Thyroid gland (tissue), 4 donors: ENCODE measurements at regions of chr3 and their contacts with region 1.

Region 1: DNA sequence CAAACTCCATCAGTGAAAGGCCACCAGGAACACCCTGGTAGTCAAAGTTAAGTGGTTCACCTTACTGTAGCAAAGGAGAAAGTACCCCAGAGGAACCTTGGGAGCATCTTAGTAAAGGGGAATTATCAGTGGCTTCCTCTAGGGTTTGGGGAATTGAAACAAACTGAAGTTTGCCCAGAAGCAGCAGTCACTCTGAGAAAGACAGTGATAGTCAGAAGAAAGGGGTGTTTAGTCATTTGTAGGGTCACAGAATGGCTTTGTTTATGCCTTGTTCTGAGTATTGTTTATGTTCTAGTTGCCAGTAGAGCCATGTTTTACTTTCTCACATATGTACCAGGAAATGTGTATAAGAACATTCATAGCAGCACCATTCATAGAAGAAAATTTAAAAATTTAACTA is 93.8 kb downstream of the FHIT start:
- DNase-seq: no peak
- H3K4me3 ChIP-seq: no peak overlapping the region
- H3K27ac ChIP-seq: no peak overlapping the region
- H3K4me1 ChIP-seq: peaks cover 0 to 4% of the 10 kb centered on the region in 2 donors
- H3K27me3 ChIP-seq: no peaks in the 10 kb centered on the region
- CTCF ChIP-seq: no peak
- POLR2A ChIP-seq: no peak

Region 2: DNA sequence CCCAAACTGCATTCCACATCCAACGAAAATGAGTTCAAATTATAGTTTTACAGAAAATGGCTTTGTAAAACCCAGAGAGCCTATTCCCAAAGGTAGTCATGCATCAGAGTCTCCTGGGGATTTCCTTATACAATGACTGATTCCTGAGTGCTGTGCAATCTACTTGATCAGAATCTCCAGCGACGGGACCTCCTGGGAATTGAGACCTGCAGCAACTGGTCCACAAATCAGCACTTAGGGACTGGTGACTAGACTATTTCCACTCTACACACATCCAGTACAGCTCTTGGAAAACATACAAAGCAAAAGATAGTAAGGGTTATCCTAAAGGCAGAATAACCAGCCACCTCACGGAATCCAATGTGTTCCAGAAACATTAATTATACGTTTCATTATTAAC is 1236.6 kb before region 1 on chr3:
- intact Hi-C with region 1: loop called (anchors 10 kb)
- DNase-seq: peak; percentile 24 to 38
- H3K4me3 ChIP-seq: no peak overlapping the region
- H3K27ac ChIP-seq: no peak overlapping the region
- H3K4me1 ChIP-seq: no peaks in the 10 kb centered on the region
- H3K27me3 ChIP-seq: no peaks in the 10 kb centered on the region
- CTCF ChIP-seq: no peak
- POLR2A ChIP-seq: no peak

Region 3: DNA sequence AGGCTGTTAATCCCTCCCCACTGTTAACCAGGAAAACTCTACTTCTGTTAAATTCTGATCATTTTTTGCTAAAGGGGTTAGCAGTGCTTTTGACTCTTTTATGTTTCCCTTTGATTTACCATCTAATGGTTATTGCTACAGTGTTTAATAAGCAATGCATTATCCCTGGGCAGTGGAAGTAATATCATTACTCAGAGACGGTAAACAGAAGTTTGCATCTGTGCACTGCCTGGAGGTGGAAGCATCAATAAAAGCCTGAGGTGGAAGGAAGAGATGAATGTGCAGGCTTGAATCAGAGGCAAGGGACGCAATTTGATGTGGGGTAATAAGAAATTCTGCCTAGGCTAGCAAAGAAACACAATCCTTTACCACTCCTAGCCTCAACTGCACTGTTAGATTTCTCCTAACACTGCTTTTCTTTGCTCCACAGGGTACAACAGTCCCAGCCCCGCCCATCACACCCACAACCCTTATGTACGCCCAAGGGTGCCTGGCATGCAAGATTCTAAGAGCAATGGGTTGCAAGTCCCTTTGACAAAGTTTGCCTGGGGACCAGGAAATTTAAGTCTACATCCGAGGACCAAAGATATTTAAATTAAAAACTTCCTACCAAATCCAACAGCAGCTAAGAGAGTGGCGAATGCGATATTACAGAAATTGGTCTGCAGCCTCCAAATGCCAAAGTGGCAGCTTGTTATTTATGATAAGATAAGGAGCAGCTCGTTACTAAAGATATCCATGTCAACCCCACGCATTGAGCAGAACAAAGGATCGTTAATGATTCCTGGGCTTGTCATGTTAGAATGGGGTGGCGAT is 167.6 kb before region 1 on chr3:
- intact Hi-C with region 1: no loop called
- DNase-seq: no peak
- H3K4me3 ChIP-seq: no peak overlapping the region
- H3K27ac ChIP-seq: no peak overlapping the region
- H3K4me1 ChIP-seq: no peaks in the 10 kb centered on the region
- H3K27me3 ChIP-seq: no peaks in the 10 kb centered on the region
- CTCF ChIP-seq: no peak
- POLR2A ChIP-seq: no peak